ENCODE measurements at regions of chr1 and their contacts with region 1.

Region 1: GRCh38 chr1:191886977-191887376 is 271.3 kb upstream of the RGS18 start:
- DNase-seq: no peak
- ATAC-seq: no peak
- H3K4me3 ChIP-seq: no peak overlapping the region
- H3K27ac ChIP-seq: no peak overlapping the region
- H3K4me1 ChIP-seq: no peaks in the 10 kb centered on the region
- H3K27me3 ChIP-seq: no peaks in the 10 kb centered on the region
- CTCF ChIP-seq: no peak

Region 2: GRCh38 chr1:191839891-191840290 is 47.1 kb before region 1 on chr1:
- intact Hi-C with region 1: loop called in 1 of 2 experiments (anchors 1 kb)
- DNase-seq: no peak
- ATAC-seq: no peak
- H3K4me3 ChIP-seq: no peak overlapping the region
- H3K27ac ChIP-seq: no peak overlapping the region
- H3K4me1 ChIP-seq: no peaks in the 10 kb centered on the region
- H3K27me3 ChIP-seq: no peaks in the 10 kb centered on the region
- CTCF ChIP-seq: no peak